ENCODE measurements at regions of chr11 and their contacts with region 1.

Region 1: GRCh38 chr11:61028272-61028761 is 56.8 kb downstream of the CD6 start:
- DNase-seq: peak; percentile 88
- H3K4me3 Mint-ChIP-seq: peak overlapping the region; percentile 83
- H3K27ac Mint-ChIP-seq: peak overlapping the region; percentile 96
- H3K4me1 Mint-ChIP-seq: peaks cover 77% of the 10 kb centered on the region
- H3K27me3 Mint-ChIP-seq: no peaks in the 10 kb centered on the region

Region 2: GRCh38 chr11:61129639-61130523 is 101.6 kb after region 1 on chr11:
- CTCF ChIA-PET with region 1: interaction called, 13 read pairs
- POLR2A ChIA-PET with region 1: no interaction called
- intact Hi-C with region 1: no loop called
- DNase-seq: peak; percentile 95
- H3K4me3 Mint-ChIP-seq: peak overlapping the region; percentile 17
- H3K27ac Mint-ChIP-seq: peak overlapping the region; percentile 57
- H3K4me1 Mint-ChIP-seq: peaks cover 25% of the 10 kb centered on the region
- H3K27me3 Mint-ChIP-seq: no peaks in the 10 kb centered on the region